Right lobe of liver (tissue), 6 donors: ENCODE measurements at regions of chr13 and their contacts with region 1.

Region 1: GRCh38 chr13:30334663-30335386 is 27.5 kb upstream of the KATNAL1 start:
- DNase-seq: peak; percentile 66 to 92 (median 82)
- ATAC-seq: peak; percentile 94 to 97 (median 95)
- H3K4me3 ChIP-seq: peak overlapping the region in 2 of 3 donors; percentile 11 to 15
- H3K27ac ChIP-seq: peak overlapping the region in 2 of 3 donors; percentile 72 to 86
- H3K4me1 ChIP-seq: peaks cover 0 to 3% (median 0%) of the 10 kb centered on the region in 4 donors
- H3K27me3 ChIP-seq: no peaks in the 10 kb centered on the region
- CTCF ChIP-seq: peak; percentile 69 to 91 (median 80)
- POLR2A ChIP-seq: no peak

Region 2: DNA sequence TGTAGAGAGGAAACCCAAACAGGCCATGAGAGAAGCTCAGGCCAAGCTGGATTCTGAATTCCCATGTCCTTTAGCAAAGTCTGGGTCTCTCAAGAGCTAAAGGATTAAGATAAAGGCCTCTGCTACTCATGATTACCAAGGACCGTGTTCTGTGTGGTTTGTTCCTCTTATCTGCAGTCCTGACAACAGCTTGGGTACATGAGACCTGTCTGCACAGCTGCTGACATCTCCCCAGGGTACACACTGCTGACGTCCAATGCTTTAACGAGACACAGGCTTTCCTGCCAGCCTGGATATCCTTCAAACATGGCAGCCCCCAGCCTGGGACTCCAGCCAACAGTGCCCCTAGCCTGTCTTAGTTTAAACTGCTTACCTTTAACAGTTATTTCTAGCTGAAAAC is 950.4 kb before region 1 on chr13:
- intact Hi-C with region 1: no loop called
- DNase-seq: no peak
- ATAC-seq: no peak
- H3K4me3 ChIP-seq: no peak overlapping the region
- H3K27ac ChIP-seq: no peak overlapping the region
- H3K4me1 ChIP-seq: no peaks in the 10 kb centered on the region
- H3K27me3 ChIP-seq: no peaks in the 10 kb centered on the region
- CTCF ChIP-seq: no peak
- POLR2A ChIP-seq: no peak

Region 3: DNA sequence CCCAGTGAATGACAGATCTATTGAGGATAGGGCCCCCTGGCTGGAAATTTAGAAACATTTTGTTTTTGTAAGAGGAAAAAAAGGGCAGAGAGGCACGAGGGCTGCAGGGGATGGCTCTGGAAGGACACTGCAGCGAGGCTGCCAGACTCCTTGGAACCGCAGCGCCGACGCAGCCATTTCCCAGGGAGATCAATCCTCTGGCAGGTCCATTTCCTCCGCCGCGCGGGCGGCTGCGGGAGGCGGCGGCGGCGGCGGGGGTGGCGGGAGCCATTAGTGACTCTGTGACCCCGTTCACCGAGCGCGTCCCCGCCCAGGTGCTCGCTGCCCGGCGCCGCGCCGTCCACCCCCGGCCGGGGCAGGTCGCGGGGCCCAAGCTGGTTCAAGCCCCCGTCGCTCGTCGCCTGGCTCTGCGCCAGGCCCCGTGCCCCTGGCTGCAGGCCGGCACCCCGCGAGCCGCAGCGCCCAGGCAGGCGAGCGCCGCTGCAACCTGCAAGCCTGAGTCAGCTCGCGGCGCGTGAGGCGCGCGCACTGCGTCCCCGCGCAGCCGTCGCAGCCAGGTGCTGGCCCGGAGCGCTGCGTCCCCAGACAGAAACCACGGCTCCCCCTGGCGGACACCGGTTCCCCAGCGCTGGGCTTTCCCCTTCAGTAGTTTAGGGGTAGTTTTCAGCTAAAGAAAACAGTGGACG is 220.1 kb before region 1 on chr13:
- intact Hi-C with region 1: no loop called
- DNase-seq: peak; percentile 92 to 93 (median 93)
- ATAC-seq: peak; percentile 84 to 91 (median 90)
- H3K4me3 ChIP-seq: peak overlapping the region; percentile 50 to 67 (median 55)
- H3K27ac ChIP-seq: peak overlapping the region; percentile 76 to 89 (median 83)
- H3K4me1 ChIP-seq: peaks cover 0 to 18% (median 6%) of the 10 kb centered on the region in 4 donors
- H3K27me3 ChIP-seq: no peaks in the 10 kb centered on the region
- CTCF ChIP-seq: peak; percentile 88 to 96 (median 94)
- POLR2A ChIP-seq: peak; percentile 82

Region 4: GRCh38 chr13:30395192-30396084 is 60.6 kb after region 1 on chr13:
- intact Hi-C with region 1: loop called in 1 of 2 experiments (anchors 5 kb)
- DNase-seq: peak; percentile 92 to 98 (median 97)
- ATAC-seq: peak; percentile 53 to 77 (median 59)
- H3K4me3 ChIP-seq: peak overlapping the region; percentile 46 to 51 (median 47)
- H3K27ac ChIP-seq: peak overlapping the region; percentile 91 to 98 (median 95)
- H3K4me1 ChIP-seq: peaks cover 0 to 52% (median 11%) of the 10 kb centered on the region in 4 donors
- H3K27me3 ChIP-seq: no peaks in the 10 kb centered on the region
- CTCF ChIP-seq: no peak
- POLR2A ChIP-seq: peak; percentile 70